K562 (cell line): ENCODE measurements at regions of chr13 and their contacts with region 1.

Region 1: DNA sequence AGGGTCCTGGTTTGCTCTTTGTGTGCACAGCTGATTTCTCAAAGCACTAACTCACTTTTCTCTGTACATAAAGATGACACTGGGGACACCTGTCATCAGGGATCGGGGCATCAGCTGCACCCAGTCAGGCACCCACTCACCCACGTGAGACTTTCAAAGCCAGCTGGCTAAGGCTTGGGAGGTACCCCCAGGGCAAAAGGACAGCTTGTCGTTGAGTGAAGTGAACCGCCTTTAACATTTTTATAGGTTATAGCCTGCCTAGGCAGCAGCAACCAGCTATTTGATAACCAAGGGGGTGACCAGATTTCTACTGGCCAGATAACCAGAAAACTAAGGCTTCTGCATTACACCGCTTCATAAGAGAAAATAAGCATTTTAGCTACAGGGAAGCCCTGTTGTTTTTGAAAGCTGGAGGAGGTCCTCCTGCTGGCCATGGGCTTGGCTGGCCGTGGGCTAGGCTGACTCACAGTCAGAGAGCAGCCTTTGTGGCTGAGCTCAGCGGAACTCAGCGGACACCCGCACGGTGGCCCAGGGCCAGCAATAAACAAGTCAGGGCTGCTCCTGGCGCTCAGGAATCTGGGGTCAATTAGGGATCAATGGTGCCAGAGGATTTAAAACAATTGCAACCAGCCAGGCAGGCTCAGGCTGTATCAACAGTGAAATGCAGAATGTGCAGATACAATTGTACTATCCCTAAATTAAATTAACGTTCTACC is 57.1 kb downstream of the ALOX5AP start:
- DNase-seq: peak in 1 of 4 experiments; percentile 3
- ATAC-seq: peak; percentile 44; the same call in 1 of the 3 replicates
- H3K4me3 ChIP-seq: no peak overlapping the region
- H3K27ac ChIP-seq: no peak overlapping the region
- H3K4me1 ChIP-seq: no peaks in the 10 kb centered on the region; a peak in 1 of 5 replicates
- H3K27me3 ChIP-seq: peaks cover 0 to 26% of the 10 kb centered on the region in 2 experiments; a peak in 2 of 5 replicates
- CTCF ChIP-seq: no peak
- EP300 ChIP-seq: no peak
- POLR2A ChIP-seq: no peak
- RAD21 ChIP-seq: no peak

Region 2: DNA sequence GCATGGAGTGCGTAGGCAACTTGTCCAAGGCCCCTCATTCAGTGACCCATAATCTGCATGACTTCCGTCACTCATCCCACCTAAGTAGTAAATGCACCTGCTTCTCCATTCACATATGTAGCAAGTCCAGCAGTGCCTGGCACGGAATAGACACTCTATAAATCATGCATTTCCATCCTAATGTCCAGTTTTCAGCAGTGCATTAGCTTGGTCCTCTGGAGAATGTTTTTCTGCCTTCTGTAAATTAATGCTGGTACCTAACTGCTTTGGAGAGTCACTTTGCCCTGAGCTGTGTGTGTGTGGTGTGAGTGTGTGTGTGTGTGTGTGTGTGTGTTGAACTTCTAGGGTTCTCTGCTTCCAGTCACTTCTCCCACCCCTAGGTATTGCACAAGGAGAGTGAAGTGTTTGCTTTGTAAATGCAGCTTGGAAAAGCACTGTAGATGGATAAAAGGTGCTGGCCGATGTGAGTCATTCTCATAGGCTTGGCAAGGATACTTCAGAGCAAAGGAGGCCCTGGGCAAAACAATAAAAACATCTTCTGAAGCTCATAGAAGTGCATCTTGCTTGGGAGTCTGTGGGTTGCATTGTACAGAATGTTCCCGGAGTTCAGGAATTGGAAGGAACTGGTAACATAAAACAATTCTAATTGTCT is 666.9 kb before region 1 on chr13:
- CTCF ChIA-PET with region 1: no interaction called
- POLR2A ChIA-PET with region 1: no interaction called
- in situ Hi-C with region 1: loop called (anchors 10 kb)
- intact Hi-C with region 1: no loop called
- DNase-seq: no peak
- ATAC-seq: no peak
- H3K4me3 ChIP-seq: no peak overlapping the region
- H3K27ac ChIP-seq: no peak overlapping the region
- H3K4me1 ChIP-seq: no peaks in the 10 kb centered on the region; a peak in 1 of 5 replicates
- H3K27me3 ChIP-seq: peaks cover 14 to 34% of the 10 kb centered on the region in 2 experiments; a peak in 3 of 5 replicates
- CTCF ChIP-seq: no peak
- EP300 ChIP-seq: no peak
- POLR2A ChIP-seq: no peak
- RAD21 ChIP-seq: no peak

Region 3: DNA sequence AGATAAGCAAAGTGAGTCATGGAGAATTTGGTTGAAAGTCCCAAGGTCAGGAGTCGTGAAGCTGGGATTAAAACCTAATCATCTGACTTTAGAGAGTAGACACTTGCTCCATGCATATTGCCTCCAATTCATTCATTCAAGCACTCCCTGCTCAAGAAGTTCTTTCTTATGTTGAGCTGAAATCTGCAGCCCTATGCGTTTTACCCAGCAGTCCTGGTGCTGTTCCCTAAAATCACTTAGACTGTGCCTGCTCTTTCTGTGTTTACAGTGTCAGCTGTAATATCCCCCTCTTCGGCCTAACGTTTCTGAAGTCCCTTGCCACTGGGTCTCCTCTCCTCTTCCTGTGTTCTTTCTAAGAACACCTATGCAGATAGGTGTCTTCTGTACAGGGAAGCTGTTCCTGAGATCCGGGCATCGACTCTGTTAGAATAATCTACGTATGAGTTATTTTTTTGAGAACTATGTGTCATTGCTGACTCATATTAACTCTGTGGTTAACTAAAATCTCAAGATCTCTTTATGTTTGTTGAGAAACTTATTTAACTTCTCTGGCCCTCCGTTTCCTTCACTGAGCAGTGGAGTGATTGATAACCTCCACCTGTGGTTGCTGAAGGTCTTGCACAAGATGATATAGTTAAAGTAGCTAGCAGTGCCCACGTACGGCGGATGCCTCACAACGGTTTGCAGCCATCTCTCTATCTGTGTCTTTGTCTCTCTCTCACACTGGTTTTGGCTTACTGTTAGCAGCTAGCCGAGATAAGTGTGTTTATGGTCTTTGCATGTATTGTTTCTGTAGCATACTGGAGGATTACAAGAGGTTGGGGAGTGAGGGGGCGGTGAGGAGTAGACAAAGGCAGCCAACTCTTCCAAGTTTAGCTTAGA is 52.4 kb before region 1 on chr13:
- CTCF ChIA-PET with region 1: no interaction called
- POLR2A ChIA-PET with region 1: no interaction called
- in situ Hi-C with region 1: no loop called
- intact Hi-C with region 1: no loop called
- DNase-seq: peak in 1 of 4 experiments; percentile 8
- ATAC-seq: no peak; the same call in 2 of the 3 replicates
- H3K4me3 ChIP-seq: no peak overlapping the region
- H3K27ac ChIP-seq: no peak overlapping the region
- H3K4me1 ChIP-seq: no peaks in the 10 kb centered on the region
- H3K27me3 ChIP-seq: peaks cover 3 to 22% of the 10 kb centered on the region in 2 experiments; a peak in 3 of 5 replicates
- CTCF ChIP-seq: no peak
- EP300 ChIP-seq: no peak
- POLR2A ChIP-seq: no peak
- RAD21 ChIP-seq: no peak

Region 4: GRCh38 chr13:30763786-30764413 is 28.5 kb before region 1 on chr13:
- CTCF ChIA-PET with region 1: no interaction called
- POLR2A ChIA-PET with region 1: no interaction called
- in situ Hi-C with region 1: no loop called
- intact Hi-C with region 1: no loop called
- DNase-seq: no peak
- ATAC-seq: no peak
- H3K4me3 ChIP-seq: no peak overlapping the region
- H3K27ac ChIP-seq: no peak overlapping the region
- H3K4me1 ChIP-seq: no peaks in the 10 kb centered on the region
- H3K27me3 ChIP-seq: no peaks in the 10 kb centered on the region; a peak in 4 of 5 replicates
- CTCF ChIP-seq: no peak
- EP300 ChIP-seq: no peak
- POLR2A ChIP-seq: no peak
- RAD21 ChIP-seq: no peak

Region 5: GRCh38 chr13:30865123-30866049 is 72.9 kb after region 1 on chr13:
- CTCF ChIA-PET with region 1: no interaction called
- POLR2A ChIA-PET with region 1: no interaction called
- in situ Hi-C with region 1: no loop called
- intact Hi-C with region 1: no loop called
- DNase-seq: peak; percentile 53 to 64 (median 62)
- ATAC-seq: peak; percentile 91
- H3K4me3 ChIP-seq: no peak overlapping the region
- H3K27ac ChIP-seq: no peak overlapping the region
- H3K4me1 ChIP-seq: no peaks in the 10 kb centered on the region; a peak in 1 of 5 replicates
- H3K27me3 ChIP-seq: peaks cover 2 to 11% of the 10 kb centered on the region in 2 experiments; a peak in 3 of 5 replicates
- CTCF ChIP-seq: peak; percentile 70 to 82 (median 74)
- EP300 ChIP-seq: no peak
- POLR2A ChIP-seq: no peak
- RAD21 ChIP-seq: peak; percentile 57 to 72